SK-N-SH (cell line): ENCODE measurements at regions of chr11 and their contacts with region 1.

Region 1: DNA sequence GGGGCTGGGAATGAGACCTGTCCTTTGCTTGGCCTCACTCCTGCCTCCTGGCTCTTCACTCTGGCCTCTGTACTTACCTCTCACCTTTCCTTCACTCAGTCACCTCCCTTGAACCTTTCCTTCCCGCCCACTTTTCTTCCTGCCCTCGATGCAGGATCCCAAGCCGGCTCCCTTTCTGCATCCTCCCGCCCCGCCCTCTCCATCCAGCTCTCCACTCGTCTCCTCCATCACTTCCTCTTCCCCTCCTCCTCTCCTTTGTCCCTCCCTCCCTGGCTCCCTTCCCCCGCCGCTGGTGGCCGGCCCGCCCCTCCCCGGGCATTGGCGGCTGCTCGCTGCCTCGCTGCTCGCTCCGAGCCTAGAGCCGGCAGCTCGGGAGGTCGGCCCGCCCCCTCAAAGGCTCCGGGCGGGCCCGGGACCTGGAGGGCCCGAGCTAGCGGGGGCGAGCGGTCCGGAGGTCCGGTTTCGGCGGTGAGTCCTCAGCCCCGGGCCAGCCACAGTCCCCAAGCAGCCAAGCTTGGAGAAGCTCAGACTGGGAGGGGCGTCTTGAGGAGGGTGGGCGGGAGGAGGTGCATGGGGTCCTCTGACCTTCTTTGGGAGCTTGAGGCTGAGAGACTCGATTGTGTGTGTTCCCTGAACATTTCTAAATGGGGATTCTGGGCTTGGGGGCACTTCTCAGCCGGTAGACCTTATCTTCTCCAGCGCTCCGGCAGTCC is 13.8 kb downstream of the PHLDB1 start:
- DNase-seq: peak; percentile 93
- H3K4me3 ChIP-seq: peak overlapping the region; percentile 79 to 95
- H3K27ac ChIP-seq: peak overlapping the region; percentile 97 to 100
- H3K4me1 ChIP-seq: peaks cover 44 to 66% of the 10 kb centered on the region in 2 experiments
- H3K27me3 ChIP-seq: no peaks in the 10 kb centered on the region
- CTCF ChIP-seq: no peak
- EP300 ChIP-seq: no peak
- RAD21 ChIP-seq: no peak

Region 2: DNA sequence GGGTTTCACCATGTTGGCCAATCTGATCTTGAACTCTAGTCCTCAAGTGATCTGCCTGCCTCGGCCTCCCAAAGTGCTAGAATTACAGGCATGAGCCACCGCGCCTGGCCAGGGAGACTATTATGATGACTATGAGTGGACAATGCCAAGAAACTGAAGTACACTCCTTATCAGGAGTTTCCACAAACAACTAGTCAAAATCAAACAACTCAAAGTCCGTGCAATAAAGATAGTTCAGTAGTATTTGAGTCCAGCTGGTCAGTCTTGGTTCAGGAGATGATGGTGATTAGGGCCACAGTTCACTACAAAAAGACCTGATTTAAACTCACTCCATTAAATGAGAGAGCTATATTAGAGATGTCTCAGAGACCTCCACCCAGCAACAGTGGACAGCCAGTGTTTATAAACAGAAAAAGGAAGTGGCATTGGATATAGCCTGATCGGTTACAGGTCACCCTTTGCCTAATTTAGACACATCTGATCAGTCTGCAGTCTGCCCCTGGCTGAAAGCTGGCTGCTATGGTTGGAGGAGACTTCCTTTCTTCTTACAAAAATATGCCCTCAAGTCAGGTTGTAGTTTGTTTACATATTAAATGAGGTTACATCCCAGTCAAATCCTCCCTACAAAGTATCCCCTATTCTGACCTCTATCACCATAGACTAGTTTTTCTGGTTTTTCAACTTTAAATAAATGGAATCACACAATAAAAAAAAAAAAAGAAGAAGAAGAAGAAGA is 299.7 kb before region 1 on chr11:
- CTCF ChIA-PET with region 1: no interaction called
- POLR2A ChIA-PET with region 1: no interaction called
- DNase-seq: no peak
- H3K4me3 ChIP-seq: no peak overlapping the region
- H3K27ac ChIP-seq: no peak overlapping the region
- H3K4me1 ChIP-seq: no peaks in the 10 kb centered on the region
- H3K27me3 ChIP-seq: peaks cover 29% of the 10 kb centered on the region; the same call in 1 of the 2 replicates
- CTCF ChIP-seq: no peak
- EP300 ChIP-seq: no peak
- RAD21 ChIP-seq: no peak

Region 3: DNA sequence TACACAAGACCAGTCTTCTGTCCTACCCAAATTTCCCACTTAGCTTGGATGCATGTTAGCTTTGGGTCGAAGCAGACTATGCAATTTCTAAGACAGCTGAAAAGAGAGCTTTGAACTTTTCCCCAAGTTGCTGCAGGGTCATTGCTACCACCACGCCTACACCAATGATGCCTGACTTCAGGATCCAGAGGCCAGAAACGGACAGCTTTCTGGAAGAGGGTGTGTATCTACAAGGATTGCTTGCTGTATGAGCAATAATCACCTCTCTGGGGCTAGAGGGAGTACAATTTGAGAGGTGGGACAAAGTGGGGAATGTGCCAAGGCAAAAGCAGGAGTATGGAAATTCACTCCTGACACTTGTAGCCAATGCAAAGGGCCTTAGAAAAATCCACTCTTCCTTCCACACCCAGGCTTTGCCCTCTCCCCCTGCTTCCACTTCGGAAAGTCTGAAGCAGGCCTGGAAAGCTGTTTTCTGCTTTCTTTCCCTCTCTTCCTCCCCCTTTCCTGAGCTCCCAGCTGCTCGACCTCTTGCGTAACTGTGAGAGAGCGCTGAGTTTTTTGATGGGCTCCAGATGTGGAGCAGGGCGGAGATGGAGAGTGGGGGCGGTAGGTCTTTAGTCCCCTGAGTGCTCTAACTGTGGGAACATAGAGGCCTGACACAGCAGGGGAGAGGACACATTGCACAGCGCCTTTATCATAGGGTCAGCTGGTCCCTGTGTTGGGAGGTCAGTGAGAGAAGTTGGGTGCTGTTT is 15.9 kb before region 1 on chr11:
- CTCF ChIA-PET with region 1: interaction called, 63 read pairs
- POLR2A ChIA-PET with region 1: interaction called, 15 read pairs
- DNase-seq: peak; percentile 78
- H3K4me3 ChIP-seq: no peak overlapping the region
- H3K27ac ChIP-seq: peak overlapping the region; percentile 71 to 73; a peak in 3 of 4 replicates
- H3K4me1 ChIP-seq: peaks cover 28 to 31% of the 10 kb centered on the region in 2 experiments
- H3K27me3 ChIP-seq: no peaks in the 10 kb centered on the region
- CTCF ChIP-seq: no peak
- EP300 ChIP-seq: no peak; a peak in 1 of 4 replicates
- RAD21 ChIP-seq: 0 out of 2 replicates have a peak, but pooled peaks have one; percentile 16

Region 4: GRCh38 chr11:118610804-118611795 is 10.1 kb before region 1 on chr11:
- CTCF ChIA-PET with region 1: interaction called, 63 read pairs
- POLR2A ChIA-PET with region 1: interaction called, 15 read pairs
- DNase-seq: no peak
- H3K4me3 ChIP-seq: no peak overlapping the region; a peak in 1 of 4 replicates
- H3K27ac ChIP-seq: no peak overlapping the region
- H3K4me1 ChIP-seq: peaks cover 14 to 41% of the 10 kb centered on the region in 2 experiments
- H3K27me3 ChIP-seq: no peaks in the 10 kb centered on the region
- CTCF ChIP-seq: peak; percentile 54
- EP300 ChIP-seq: no peak
- RAD21 ChIP-seq: no peak

Region 5: GRCh38 chr11:118634431-118635236 is 13.4 kb after region 1 on chr11:
- CTCF ChIA-PET with region 1: no interaction called
- POLR2A ChIA-PET with region 1: interaction called, 30 read pairs
- DNase-seq: peak; percentile 69
- H3K4me3 ChIP-seq: no peak overlapping the region
- H3K27ac ChIP-seq: peak overlapping the region in 1 of 2 experiments; percentile 40; a peak in 1 of 4 replicates
- H3K4me1 ChIP-seq: peaks cover 5 to 9% of the 10 kb centered on the region in 2 experiments; a peak in 2 of 4 replicates
- H3K27me3 ChIP-seq: no peaks in the 10 kb centered on the region
- CTCF ChIP-seq: no peak
- EP300 ChIP-seq: no peak
- RAD21 ChIP-seq: no peak

Region 6: DNA sequence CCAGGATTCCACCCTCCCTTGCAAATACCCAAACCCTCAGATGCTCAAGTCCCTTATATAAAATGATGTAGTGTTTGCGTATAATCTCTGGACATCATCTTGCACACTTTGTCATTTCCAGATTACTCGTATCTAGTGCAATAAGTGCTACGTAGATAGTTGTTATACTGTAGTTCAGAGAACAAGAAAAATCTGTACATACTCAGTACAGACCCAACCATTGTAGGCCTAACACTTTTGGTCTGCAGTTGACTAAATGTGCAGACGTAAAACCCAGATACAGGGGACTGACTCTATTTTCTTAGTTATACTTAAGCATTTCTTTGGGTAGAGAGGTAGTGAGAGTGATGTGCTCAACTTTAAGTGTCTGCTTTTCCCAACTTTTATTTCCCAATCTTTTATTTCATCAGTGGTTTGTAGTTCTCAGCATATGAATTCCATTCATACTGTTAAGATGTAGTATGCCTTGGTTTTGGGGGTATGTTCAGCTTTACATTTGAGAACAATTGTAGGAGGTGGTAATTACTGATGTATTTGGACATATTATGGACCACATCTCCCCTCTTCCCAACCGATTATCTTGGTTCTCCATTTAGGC is 125.9 kb after region 1 on chr11:
- CTCF ChIA-PET with region 1: no interaction called
- POLR2A ChIA-PET with region 1: no interaction called
- DNase-seq: no peak
- H3K4me3 ChIP-seq: no peak overlapping the region
- H3K27ac ChIP-seq: 0 out of 4 replicates have a peak overlapping the region, but pooled peaks of 1 of the 2 experiments have one; percentile 14
- H3K4me1 ChIP-seq: peaks cover 0 to 12% of the 10 kb centered on the region in 2 experiments; a peak in 3 of 4 replicates
- H3K27me3 ChIP-seq: no peaks in the 10 kb centered on the region
- CTCF ChIP-seq: no peak
- EP300 ChIP-seq: no peak
- RAD21 ChIP-seq: no peak